Prostate gland (tissue), 2 donors: ENCODE measurements at regions of chr16 and their contacts with region 1.

Region 1: DNA sequence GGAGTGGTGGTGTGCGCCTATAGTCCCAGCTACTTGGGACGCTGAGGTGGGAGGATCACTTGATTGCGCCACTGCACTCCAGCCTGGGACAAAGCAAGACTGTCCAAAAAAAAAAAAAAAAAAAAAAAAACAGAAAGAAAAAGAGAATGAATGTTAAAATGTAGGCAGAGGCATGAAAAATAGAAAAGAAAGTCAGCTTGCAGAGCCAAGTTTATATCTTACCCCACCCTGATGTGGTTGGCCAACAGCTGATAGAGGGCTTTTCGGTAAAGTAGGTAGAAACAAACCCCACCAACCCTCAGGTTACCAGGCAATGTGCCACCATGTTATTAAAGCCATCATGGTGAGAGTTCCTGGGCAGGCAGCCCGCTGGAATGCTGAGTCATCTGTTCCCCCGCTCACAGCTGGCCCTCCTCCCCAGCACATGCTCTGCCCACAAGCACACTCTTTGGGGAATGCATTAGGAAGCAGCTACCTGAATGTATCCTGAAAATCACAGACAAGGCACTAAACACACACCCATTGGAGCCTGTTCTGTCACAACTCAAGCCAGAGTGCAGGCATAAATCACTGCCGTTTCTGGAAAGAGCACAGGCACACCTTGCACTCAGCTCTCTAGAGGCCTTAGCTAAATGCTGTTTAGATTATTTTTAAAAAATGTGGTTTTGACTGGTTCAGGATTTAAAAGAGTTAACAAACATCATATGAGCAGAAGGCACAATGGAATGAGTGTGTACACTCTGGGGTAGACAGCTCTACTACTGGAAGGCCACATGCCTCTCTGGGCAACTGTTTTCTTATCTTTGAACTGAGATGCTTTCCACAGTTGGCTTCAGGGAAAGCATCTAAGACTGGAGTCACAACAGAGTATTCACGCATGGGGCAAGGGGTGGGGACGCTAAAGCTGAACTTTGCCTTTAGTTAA is 128.5 kb downstream of the PARN start:
- DNase-seq: peak; percentile 88
- H3K4me3 ChIP-seq: no peak overlapping the region
- H3K27ac ChIP-seq: peak overlapping the region; percentile 13 to 45
- H3K4me1 ChIP-seq: peaks cover 3% of the 10 kb centered on the region
- H3K27me3 ChIP-seq: no peaks in the 10 kb centered on the region
- CTCF ChIP-seq: no peak
- POLR2A ChIP-seq: no peak

Region 2: GRCh38 chr16:12535535-12536411 is 1965.8 kb before region 1 on chr16:
- intact Hi-C with region 1: no loop called
- DNase-seq: no peak
- H3K4me3 ChIP-seq: no peak overlapping the region
- H3K27ac ChIP-seq: no peak overlapping the region
- H3K4me1 ChIP-seq: no peaks in the 10 kb centered on the region
- H3K27me3 ChIP-seq: no peaks in the 10 kb centered on the region
- CTCF ChIP-seq: no peak
- POLR2A ChIP-seq: no peak

Region 3: GRCh38 chr16:14486520-14487303 is 14.9 kb before region 1 on chr16:
- intact Hi-C with region 1: loop called (anchors 2 kb)
- DNase-seq: peak; percentile 85
- H3K4me3 ChIP-seq: no peak overlapping the region
- H3K27ac ChIP-seq: peak overlapping the region; percentile 33 to 35
- H3K4me1 ChIP-seq: no peaks in the 10 kb centered on the region
- H3K27me3 ChIP-seq: no peaks in the 10 kb centered on the region
- CTCF ChIP-seq: peak in 1 of 4 experiments; percentile 9
- POLR2A ChIP-seq: no peak